ENCODE measurements at regions of chr16 and their contacts with region 1.

Region 1: DNA sequence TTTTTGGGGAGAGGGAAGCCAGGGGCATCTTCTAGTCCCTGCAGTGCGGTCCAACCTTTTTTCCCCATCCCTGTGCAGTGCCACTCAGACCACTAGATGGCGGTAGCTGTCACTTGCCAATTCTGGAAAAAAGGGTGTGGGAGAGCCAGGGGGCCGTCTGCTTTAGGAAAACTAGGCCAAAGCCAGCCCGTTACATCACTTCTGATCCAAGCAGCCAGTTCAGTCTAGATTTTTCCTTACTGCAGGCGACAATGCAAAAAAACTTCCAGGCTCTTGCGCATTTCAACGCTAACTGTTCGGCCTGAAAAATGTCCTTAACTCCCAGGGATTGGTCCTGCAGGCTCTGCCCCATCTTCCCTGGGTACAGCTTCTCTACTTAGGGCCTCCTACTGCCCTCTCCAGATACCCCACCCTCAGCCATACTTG is 69.2 kb upstream of the CES5A start:
- DNase-seq: peak; percentile 40 to 48 (median 44)
- H3K4me3 ChIP-seq: no peak overlapping the region
- H3K4me3 Mint-ChIP-seq: no peak overlapping the region
- H3K27ac ChIP-seq: no peak overlapping the region
- H3K27ac Mint-ChIP-seq: no peak overlapping the region
- H3K4me1 ChIP-seq: no peaks in the 10 kb centered on the region
- H3K4me1 Mint-ChIP-seq: peaks cover 0 to 2% (median 0%) of the 10 kb centered on the region in 4 donors
- H3K27me3 ChIP-seq: no peaks in the 10 kb centered on the region
- H3K27me3 Mint-ChIP-seq: peaks cover 39 to 40% of the 10 kb centered on the region in 2 donors

Region 2: GRCh38 chr16:55294931-55295342 is 649.5 kb before region 1 on chr16:
- CTCF ChIA-PET with region 1: no interaction called
- POLR2A ChIA-PET with region 1: no interaction called
- intact Hi-C with region 1: no loop called
- DNase-seq: no peak
- H3K4me3 ChIP-seq: no peak overlapping the region
- H3K4me3 Mint-ChIP-seq: no peak overlapping the region
- H3K27ac ChIP-seq: no peak overlapping the region
- H3K27ac Mint-ChIP-seq: no peak overlapping the region
- H3K4me1 ChIP-seq: no peaks in the 10 kb centered on the region
- H3K4me1 Mint-ChIP-seq: no peaks in the 10 kb centered on the region
- H3K27me3 ChIP-seq: no peaks in the 10 kb centered on the region
- H3K27me3 Mint-ChIP-seq: peaks cover 2 to 7% of the 10 kb centered on the region in 2 donors

Region 3: DNA sequence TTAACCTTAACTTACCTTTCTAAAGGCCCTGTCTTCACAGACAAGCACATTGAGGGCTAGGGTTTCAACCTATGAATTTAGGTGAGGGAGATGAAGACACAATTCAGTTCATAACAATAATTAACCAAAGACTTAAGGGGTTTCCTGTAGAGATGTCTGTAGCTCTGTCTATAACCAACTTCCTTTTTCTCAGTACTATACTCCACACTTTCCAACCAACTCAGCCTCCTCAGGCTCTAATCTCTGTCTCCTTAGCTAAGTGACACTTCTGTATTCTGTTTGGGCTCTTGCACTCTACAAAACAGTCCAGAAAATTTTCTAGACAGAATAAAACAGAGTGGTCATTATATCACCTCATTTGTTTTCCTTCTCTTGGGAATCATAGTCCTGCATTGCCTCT is 352.1 kb before region 1 on chr16:
- CTCF ChIA-PET with region 1: no interaction called
- POLR2A ChIA-PET with region 1: no interaction called
- intact Hi-C with region 1: no loop called
- DNase-seq: no peak
- H3K4me3 ChIP-seq: no peak overlapping the region
- H3K4me3 Mint-ChIP-seq: no peak overlapping the region
- H3K27ac ChIP-seq: no peak overlapping the region
- H3K27ac Mint-ChIP-seq: no peak overlapping the region
- H3K4me1 ChIP-seq: no peaks in the 10 kb centered on the region
- H3K4me1 Mint-ChIP-seq: no peaks in the 10 kb centered on the region
- H3K27me3 ChIP-seq: peaks cover 5% of the 10 kb centered on the region
- H3K27me3 Mint-ChIP-seq: peaks cover 15 to 24% of the 10 kb centered on the region in 2 donors

Region 4: GRCh38 chr16:55955845-55956244 is 11.5 kb after region 1 on chr16:
- CTCF ChIA-PET with region 1: interaction called, 24 read pairs
- POLR2A ChIA-PET with region 1: no interaction called
- intact Hi-C with region 1: no loop called
- DNase-seq: no peak
- H3K4me3 ChIP-seq: no peak overlapping the region
- H3K4me3 Mint-ChIP-seq: no peak overlapping the region
- H3K27ac ChIP-seq: no peak overlapping the region
- H3K27ac Mint-ChIP-seq: peak overlapping the region in 1 of 7 donors; percentile 44
- H3K4me1 ChIP-seq: no peaks in the 10 kb centered on the region
- H3K4me1 Mint-ChIP-seq: peaks cover 0 to 2% (median 0%) of the 10 kb centered on the region in 4 donors
- H3K27me3 ChIP-seq: no peaks in the 10 kb centered on the region
- H3K27me3 Mint-ChIP-seq: peaks cover 2 to 5% of the 10 kb centered on the region in 2 donors

Region 5: DNA sequence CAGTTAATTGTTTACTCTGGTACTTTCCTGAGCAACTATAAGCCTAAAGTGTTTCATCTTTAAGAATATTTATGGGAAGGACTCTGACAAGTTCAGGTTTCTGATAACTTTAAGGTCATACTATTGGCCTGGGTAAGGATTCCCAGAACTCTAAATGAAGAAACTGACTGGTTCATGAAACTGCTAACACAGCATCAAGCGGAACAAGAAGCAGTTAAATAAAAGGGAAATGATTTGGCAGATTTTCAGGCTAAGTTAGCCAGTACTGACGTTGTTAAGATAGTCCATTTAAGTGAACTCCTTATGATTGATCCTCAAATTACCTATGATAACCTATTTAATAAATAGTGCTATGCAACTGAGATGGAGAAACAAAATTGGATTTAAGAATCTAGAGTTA is 32.4 kb after region 1 on chr16:
- CTCF ChIA-PET with region 1: no interaction called
- POLR2A ChIA-PET with region 1: no interaction called
- intact Hi-C with region 1: no loop called
- DNase-seq: no peak
- H3K4me3 ChIP-seq: no peak overlapping the region
- H3K4me3 Mint-ChIP-seq: no peak overlapping the region
- H3K27ac ChIP-seq: no peak overlapping the region
- H3K27ac Mint-ChIP-seq: no peak overlapping the region
- H3K4me1 ChIP-seq: no peaks in the 10 kb centered on the region
- H3K4me1 Mint-ChIP-seq: no peaks in the 10 kb centered on the region
- H3K27me3 ChIP-seq: no peaks in the 10 kb centered on the region
- H3K27me3 Mint-ChIP-seq: peaks cover 2 to 7% of the 10 kb centered on the region in 2 donors

Region 6: GRCh38 chr16:56425439-56425832 is 481.0 kb after region 1 on chr16 and contains the start of gene AMFR:
- CTCF ChIA-PET with region 1: no interaction called
- POLR2A ChIA-PET with region 1: no interaction called
- intact Hi-C with region 1: loop called (anchors 5 kb)
- DNase-seq: peak; percentile 63 to 83 (median 78)
- H3K4me3 ChIP-seq: peak within 1 kb of the TSS; percentile 65 to 70
- H3K4me3 Mint-ChIP-seq: peak within 1 kb of the TSS; percentile 92 to 99 (median 96)
- H3K27ac ChIP-seq: peak within 1 kb of the TSS; percentile 65
- H3K27ac Mint-ChIP-seq: peak within 1 kb of the TSS; percentile 84 to 97 (median 93)
- H3K4me1 ChIP-seq: peaks cover 38% of the 10 kb centered on the region
- H3K4me1 Mint-ChIP-seq: peaks cover 30 to 42% (median 37%) of the 10 kb centered on the region in 4 donors
- H3K27me3 ChIP-seq: no peaks in the 10 kb centered on the region
- H3K27me3 Mint-ChIP-seq: no peaks in the 10 kb centered on the region
- total RNA-seq, gene AMFR: 59.8 to 67.6 TPM